ENCODE measurements at regions of chr9 and their contacts with region 1.

Region 1: GRCh38 chr9:133030317-133031129 is at the start of gene GTF3C5:
- DNase-seq: peak; percentile 92 to 94 (median 94)
- ATAC-seq: peak; percentile 98
- H3K4me3 ChIP-seq: peak within 1 kb of the TSS; percentile 86
- H3K4me1 ChIP-seq: peaks cover 27% of the 10 kb centered on the region
- CTCF ChIP-seq: no peak
- total RNA-seq, gene GTF3C5: 45.8 to 53.6 (median 52.2) TPM

Region 2: GRCh38 chr9:133149126-133150107 is 118.9 kb after region 1 on chr9:
- intact Hi-C with region 1: loop called in 1 of 2 experiments (anchors 10 kb)
- DNase-seq: peak; percentile 90 to 94 (median 93)
- ATAC-seq: peak; percentile 79
- H3K4me3 ChIP-seq: peak overlapping the region; percentile 39
- H3K4me1 ChIP-seq: peaks cover 22% of the 10 kb centered on the region
- CTCF ChIP-seq: peak; percentile 14

Region 3: GRCh38 chr9:133509179-133510079 is 478.9 kb after region 1 on chr9:
- intact Hi-C with region 1: no loop called
- DNase-seq: peak in 2 of 3 donors; percentile 34 to 57
- ATAC-seq: peak; percentile 70
- H3K4me3 ChIP-seq: no peak overlapping the region
- H3K4me1 ChIP-seq: peaks cover 12% of the 10 kb centered on the region
- CTCF ChIP-seq: no peak